HepG2 (cell line): ENCODE measurements at regions of chr11 and their contacts with region 1.

Region 1: DNA sequence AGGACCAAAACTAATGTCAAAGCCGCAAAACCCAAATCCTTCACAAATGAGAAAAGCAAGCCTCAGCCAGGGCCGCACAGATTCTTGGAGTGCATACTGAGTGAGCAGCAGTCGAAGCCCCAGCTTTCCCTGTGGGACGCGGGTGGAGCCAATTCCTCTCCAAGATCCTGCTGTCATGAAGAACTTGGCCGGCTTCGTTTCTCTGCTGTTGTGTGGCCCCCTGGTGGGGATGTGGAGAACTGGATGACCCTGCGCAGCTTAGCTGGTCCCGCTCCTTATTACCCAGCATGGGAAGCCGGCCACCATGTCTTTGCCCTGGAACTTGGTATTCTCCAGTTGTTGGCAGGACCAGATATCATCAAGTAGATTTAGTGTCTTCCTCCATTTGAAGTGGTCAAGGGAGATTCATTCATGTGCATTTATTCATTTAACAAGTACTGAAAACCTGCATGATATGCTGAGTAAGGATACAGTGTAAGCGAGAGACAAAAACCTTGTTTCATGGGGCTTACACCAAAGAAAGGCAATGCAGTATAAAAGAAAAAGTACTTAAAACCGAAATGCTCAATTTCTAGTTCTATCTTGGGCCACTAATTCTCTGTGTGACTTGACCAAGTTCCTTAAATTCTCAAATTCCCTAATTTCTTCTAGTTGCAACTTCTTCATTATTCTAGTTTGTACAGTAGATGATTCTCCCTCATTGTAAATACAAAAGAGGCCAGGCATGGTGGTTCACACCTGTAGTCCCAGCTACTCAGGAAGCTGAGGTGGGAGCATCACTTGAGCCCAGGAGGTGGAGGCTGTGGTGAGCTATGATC is 56.7 kb upstream of the CRTAM start:
- DNase-seq: peak; percentile 58
- ATAC-seq: peak; percentile 99
- H3K4me3 ChIP-seq: no peak overlapping the region
- H3K27ac ChIP-seq: no peak overlapping the region
- H3K4me1 ChIP-seq: no peaks in the 10 kb centered on the region
- H3K27me3 ChIP-seq: no peaks in the 10 kb centered on the region
- CTCF ChIP-seq: peak; percentile 92
- EP300 ChIP-seq: no peak
- POLR2A ChIP-seq: no peak
- RAD21 ChIP-seq: peak; percentile 81

Region 2: DNA sequence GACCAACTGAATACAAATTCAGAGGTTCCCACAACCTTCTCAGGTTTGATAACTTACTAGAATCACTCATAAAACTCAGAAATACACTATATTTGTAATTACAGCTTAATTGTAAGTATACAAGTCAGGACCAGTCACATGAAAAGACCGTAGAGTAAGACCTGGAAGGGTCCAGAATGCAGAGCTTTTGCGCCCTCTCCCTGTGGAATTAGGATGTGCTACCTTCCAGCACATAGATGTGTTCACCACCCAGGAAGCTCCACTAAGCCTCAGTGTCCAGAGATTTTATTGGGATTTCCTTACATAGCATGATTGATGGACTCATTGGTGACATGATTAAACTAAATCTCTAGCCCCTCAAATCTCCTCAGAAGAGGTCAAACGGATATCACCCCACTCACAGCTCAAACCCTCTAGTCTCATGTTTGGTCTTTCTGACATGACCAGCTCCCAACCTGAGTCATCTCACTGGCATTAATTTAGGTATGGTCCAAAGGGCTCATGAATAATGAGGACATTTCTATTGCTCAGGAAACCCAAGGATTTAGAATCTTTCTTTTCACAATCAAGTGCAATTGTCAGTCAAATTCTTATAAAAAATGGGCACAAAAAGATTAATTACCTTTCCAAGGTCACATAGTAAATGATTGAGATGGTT is 203.3 kb before region 1 on chr11:
- CTCF ChIA-PET with region 1: interaction called, 5 read pairs
- POLR2A ChIA-PET with region 1: no interaction called
- in situ Hi-C with region 1: no loop called
- intact Hi-C with region 1: loop called (anchors 1 kb)
- DNase-seq: peak; percentile 6
- ATAC-seq: peak; percentile 58
- H3K4me3 ChIP-seq: no peak overlapping the region
- H3K27ac ChIP-seq: no peak overlapping the region
- H3K4me1 ChIP-seq: peaks cover 8% of the 10 kb centered on the region; the same call in 1 of the 2 replicates
- H3K27me3 ChIP-seq: no peaks in the 10 kb centered on the region
- CTCF ChIP-seq: peak; percentile 45
- EP300 ChIP-seq: no peak
- POLR2A ChIP-seq: no peak
- RAD21 ChIP-seq: no peak

Region 3: DNA sequence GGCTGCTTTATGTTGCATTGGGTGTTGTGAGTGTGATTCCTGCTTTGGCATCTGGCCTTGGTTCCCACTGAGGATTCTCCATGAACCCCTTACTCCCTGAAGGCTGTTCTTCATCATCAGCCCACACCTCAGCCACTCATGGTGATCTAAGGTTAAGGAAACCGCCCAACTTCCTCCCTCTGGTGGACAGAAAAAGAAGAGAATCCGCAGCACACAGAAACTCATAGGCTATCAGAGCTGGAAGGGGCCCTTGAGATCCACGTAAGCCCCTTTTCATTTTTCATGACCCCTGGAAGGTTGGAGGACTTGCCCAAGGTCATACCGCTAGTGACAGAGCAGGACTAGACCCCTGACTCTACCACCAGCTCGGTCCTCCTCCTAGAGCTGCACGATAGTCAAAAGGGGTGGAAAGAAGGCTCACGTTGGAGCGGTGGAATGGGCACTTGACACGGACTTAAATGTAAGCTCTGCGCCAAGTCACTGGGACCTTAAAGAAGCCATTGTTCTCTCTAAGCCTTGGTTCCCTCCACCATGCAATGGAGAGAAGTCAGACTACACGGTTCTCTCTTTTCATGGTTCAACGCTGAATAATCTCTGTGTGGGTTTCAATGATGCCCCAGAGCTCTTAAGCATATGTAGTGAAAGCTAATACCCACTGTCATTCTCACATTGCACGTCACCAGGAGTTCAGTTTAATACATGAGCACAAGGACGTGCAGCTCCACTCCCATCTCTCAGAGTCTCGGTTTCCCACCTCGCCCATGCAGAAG is 26.8 kb before region 1 on chr11:
- CTCF ChIA-PET with region 1: no interaction called
- POLR2A ChIA-PET with region 1: no interaction called
- in situ Hi-C with region 1: no loop called
- intact Hi-C with region 1: loop called (anchors 2 kb)
- DNase-seq: peak; percentile 24
- ATAC-seq: peak; percentile 93
- H3K4me3 ChIP-seq: no peak overlapping the region
- H3K27ac ChIP-seq: no peak overlapping the region
- H3K4me1 ChIP-seq: no peaks in the 10 kb centered on the region
- H3K27me3 ChIP-seq: no peaks in the 10 kb centered on the region
- CTCF ChIP-seq: peak; percentile 65
- EP300 ChIP-seq: no peak
- POLR2A ChIP-seq: no peak
- RAD21 ChIP-seq: peak; percentile 76